Right ventricle myocardium superior (tissue), 1 donor: ENCODE measurements at regions of chr3 and their contacts with region 1.

Region 1: DNA sequence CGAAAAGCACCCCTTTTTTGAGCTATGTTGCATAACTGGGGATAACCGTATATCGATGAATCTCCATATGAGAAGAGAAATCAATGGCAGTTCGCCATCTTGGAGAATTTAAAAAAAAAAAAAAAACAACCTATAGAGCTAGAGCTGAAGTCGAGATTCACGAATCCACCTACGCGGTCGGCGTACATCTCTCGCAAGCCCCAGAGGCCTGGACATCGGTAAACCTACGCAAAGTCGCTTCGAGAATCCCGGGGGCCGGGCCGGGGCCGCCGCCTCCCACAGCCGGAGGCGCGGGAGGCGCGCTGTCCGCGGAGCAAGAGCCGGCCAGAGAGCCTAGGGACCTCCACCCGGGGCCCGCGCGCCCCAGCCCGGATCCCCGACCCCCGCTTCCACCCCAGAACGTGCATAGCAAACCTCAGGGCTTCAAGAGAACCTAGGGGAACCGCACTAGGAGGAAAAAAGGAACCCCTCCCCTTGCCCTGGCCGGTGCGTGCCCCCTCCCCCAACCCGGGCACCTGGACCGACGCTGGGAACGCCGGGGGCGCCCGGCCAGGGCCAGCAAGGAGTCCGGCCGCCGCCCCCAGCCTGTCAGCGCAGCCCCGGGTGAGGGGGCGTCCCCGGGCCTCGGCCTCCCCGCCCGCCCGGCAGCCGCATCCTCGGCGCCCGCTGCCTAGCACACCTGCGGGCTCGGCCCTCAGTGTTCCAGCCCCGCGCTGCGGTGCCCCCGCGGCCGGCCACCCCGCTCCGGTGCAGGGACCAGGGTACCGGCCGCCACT is 567 bp downstream of the PFN2 start:
- DNase-seq: peak; percentile 88
- ATAC-seq: peak; percentile 74

Region 2: GRCh38 chr3:149494022-149494758 is 475.9 kb before region 1 on chr3:
- intact Hi-C with region 1: no loop called
- DNase-seq: peak; percentile 55
- ATAC-seq: peak; percentile 74

Region 3: GRCh38 chr3:150183678-150184425 is 213.7 kb after region 1 on chr3:
- intact Hi-C with region 1: loop called (anchors 5 kb)
- DNase-seq: peak; percentile 78
- ATAC-seq: peak; percentile 97

Region 4: DNA sequence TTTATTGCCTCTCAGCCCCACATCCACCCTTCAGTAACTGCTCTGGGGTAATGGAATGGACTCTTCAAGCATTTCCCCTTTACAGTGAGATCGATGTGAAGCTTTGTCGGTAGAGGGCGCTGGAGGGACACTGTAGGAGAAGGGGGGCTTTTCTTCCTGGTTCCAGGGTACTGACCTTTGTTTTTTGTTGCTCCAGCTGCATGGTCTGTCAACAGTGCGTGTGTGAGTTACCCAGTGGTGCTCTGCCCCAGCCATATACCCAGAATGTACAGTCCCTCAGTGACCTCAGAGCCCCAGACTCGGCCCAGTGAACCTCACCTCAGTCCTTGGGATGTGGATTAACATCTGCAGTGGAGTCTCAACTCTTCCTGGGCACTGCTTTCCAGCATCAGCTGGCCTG is 257.7 kb after region 1 on chr3:
- intact Hi-C with region 1: loop called (anchors 10 kb)
- DNase-seq: no peak
- ATAC-seq: peak; percentile 67